AG04449 (cell line): ENCODE measurements at regions of chr12 and their contacts with region 1.

Region 1: GRCh38 chr12:6851921-6852650 is at the start of gene USP5:
- DNase-seq: peak; percentile 97
- H3K4me3 ChIP-seq: peak within 1 kb of the TSS; percentile 98
- CTCF ChIP-seq: no peak

Region 2: DNA sequence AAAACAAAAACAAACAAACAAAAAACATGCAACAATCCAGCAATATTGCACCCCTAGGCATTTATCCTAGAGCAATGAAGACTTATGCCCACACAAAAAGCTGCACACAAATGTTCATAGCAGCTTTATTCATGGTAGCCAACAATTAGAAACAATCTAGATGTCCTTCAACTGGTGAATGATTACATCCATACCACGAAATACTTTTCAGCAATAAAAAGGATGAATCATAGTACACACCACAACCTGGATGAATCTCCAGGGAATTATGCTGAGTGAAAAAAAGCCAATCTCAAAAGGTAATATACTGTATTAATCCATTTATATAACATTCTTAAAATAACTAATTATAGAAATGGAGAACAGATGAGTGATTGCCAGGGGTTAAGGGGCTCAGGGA is 44.9 kb before region 1 on chr12:
- CTCF ChIA-PET with region 1: no interaction called
- POLR2A ChIA-PET with region 1: no interaction called
- DNase-seq: no peak
- H3K4me3 ChIP-seq: no peak overlapping the region
- CTCF ChIP-seq: no peak

Region 3: GRCh38 chr12:6839482-6840201 is 12.4 kb before region 1 on chr12:
- CTCF ChIA-PET with region 1: interaction called, 316 read pairs
- POLR2A ChIA-PET with region 1: interaction called, 43 read pairs
- DNase-seq: no peak
- H3K4me3 ChIP-seq: no peak overlapping the region
- CTCF ChIP-seq: no peak

Region 4: GRCh38 chr12:7092229-7092985 is 240.3 kb after region 1 on chr12 and contains the start of gene C1R:
- CTCF ChIA-PET with region 1: no interaction called
- POLR2A ChIA-PET with region 1: no interaction called
- DNase-seq: peak; percentile 60
- H3K4me3 ChIP-seq: peak within 1 kb of the TSS; percentile 66
- CTCF ChIP-seq: peak; percentile 74